Activated CD4-positive, alpha-beta T cell treated with anti-CD3 and anti-CD28 coated beads, Interleukin-2, amount 10 ng/mL, durations not matched to agents 24 days and 14 days (primary cell): ENCODE measurements at regions of chr1 and their contacts with region 1.

Region 1: DNA sequence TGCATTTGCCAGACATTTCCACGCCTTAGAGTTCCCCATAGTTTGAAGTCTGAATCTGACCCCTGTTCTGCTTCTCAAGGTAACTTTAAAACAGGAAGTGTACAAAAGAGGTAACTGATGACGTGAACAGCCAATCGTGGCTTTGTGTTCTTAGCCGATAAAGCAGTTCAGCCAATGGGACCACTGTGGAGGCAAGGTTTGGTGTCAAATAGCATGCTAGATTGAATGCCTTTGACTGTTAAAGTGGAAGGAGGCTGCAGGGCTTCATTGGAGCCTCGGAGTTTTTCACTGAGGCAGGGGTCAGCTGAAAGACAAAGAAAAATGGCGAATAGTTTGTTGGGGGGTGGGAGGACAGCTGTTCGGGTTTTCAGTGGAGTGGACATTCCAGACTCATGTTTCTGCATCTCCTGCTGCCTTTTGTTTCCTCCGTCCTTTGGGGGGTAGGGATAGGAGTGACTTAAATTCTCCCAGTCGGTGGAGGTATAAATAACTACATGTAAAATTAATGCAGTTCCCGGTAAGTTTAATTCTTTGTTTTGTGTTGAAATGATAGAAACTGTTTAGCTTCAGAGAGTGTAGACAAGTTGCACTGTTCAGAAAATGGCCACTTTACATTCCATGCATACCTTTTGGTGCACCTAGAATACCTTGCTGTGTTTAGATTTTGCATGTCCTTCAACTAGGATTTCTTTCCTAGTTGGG is 17.7 kb downstream of the NFYC start:
- DNase-seq: peak; percentile 93
- H3K4me3 Mint-ChIP-seq: peak overlapping the region; percentile 88
- H3K27ac Mint-ChIP-seq: peak overlapping the region; percentile 90
- H3K4me1 Mint-ChIP-seq: peaks cover 50% of the 10 kb centered on the region
- H3K27me3 Mint-ChIP-seq: no peaks in the 10 kb centered on the region

Region 2: GRCh38 chr1:40691538-40692428 is 17.5 kb before region 1 on chr1 and contains the start of gene NFYC:
- intact Hi-C with region 1: loop called (anchors 1 kb)
- DNase-seq: peak; percentile 99
- H3K4me3 Mint-ChIP-seq: peak within 1 kb of the TSS; percentile 96
- H3K27ac Mint-ChIP-seq: peak within 1 kb of the TSS; percentile 99
- H3K4me1 Mint-ChIP-seq: peaks cover 49% of the 10 kb centered on the region
- H3K27me3 Mint-ChIP-seq: no peaks in the 10 kb centered on the region
- total RNA-seq, gene NFYC: 66.5 and 73.2 TPM in 2 replicates

Region 3: DNA sequence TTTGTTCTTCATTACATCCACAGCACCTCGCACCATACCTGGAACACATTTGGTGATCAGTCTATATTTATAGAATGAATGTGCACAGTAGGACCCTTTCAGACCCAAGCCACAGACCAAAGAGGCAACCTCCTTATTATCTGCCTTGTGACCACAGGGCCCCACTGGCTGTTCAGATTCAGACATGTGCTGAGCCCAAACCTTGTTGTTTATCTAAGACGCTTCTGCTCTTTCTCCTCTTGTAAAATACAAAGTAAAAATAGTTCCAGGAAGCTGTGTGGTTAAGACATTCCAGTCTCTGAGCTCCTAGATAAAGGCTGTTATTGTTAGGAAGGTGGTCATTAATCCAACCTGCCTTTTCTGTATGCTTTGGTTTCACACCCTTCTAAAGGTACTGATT is 536.4 kb after region 1 on chr1:
- intact Hi-C with region 1: no loop called
- DNase-seq: no peak
- H3K4me3 Mint-ChIP-seq: no peak overlapping the region
- H3K27ac Mint-ChIP-seq: no peak overlapping the region
- H3K4me1 Mint-ChIP-seq: peaks cover 16% of the 10 kb centered on the region
- H3K27me3 Mint-ChIP-seq: peaks cover 6% of the 10 kb centered on the region